ENCODE measurements at regions of chr9 and their contacts with region 1.

Region 1: GRCh38 chr9:35111001-35111933 is 4.4 kb downstream of the ATOSB start:
- DNase-seq: peak; percentile 77 to 96 (median 91)
- ATAC-seq: peak; percentile 86
- H3K4me3 ChIP-seq: peak overlapping the region; percentile 69
- H3K4me3 Mint-ChIP-seq: peak overlapping the region; percentile 55 to 87 (median 80)
- H3K27ac ChIP-seq: peak overlapping the region; percentile 71
- H3K27ac Mint-ChIP-seq: peak overlapping the region; percentile 62 to 94 (median 85)
- H3K4me1 ChIP-seq: peaks cover 36 to 37% of the 10 kb centered on the region in 2 donors
- H3K4me1 Mint-ChIP-seq: peaks cover 29 to 63% (median 58%) of the 10 kb centered on the region in 7 donors
- H3K27me3 ChIP-seq: no peaks in the 10 kb centered on the region
- H3K27me3 Mint-ChIP-seq: no peaks in the 10 kb centered on the region

Region 2: DNA sequence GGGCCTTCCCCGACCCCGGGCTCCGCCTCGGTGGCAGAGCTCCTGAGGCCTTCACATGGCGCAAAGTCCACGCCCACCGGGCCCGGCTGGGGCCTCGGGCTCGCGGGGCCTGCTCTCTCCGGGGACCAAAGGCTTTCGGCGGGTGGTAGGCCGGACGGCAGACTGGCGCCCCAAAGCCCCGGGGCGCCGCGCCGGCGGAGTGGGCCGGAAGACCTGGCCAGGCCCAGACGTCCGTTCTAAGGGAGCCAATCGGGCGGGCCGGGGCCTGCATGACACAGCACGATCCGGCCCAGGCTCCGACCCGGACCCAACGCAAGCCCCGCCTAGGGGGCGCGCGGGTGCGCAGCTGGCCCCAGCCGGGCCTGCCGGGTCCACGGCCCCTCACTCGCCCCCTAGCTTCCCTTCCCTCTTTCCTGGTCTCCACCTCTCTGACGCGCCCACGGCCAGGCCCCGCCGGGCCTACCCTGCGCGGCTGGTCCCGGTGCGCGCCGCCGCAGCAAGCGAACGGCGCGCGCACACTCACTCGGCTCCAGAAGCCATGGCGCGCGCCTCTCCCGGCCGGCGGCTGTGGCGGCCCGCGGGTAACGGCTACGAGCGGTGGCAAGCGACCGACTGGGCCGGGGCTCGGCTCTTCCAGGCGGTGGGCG is 39.3 kb before region 1 on chr9:
- CTCF ChIA-PET with region 1: no interaction called
- POLR2A ChIA-PET with region 1: interaction called, 11 read pairs
- intact Hi-C with region 1: loop called (anchors 1 kb)
- DNase-seq: peak in 8 of 9 donors; percentile 67 to 83 (median 71)
- ATAC-seq: peak; percentile 70
- H3K4me3 ChIP-seq: peak overlapping the region; percentile 53
- H3K4me3 Mint-ChIP-seq: peak overlapping the region; percentile 74 to 95 (median 88)
- H3K27ac ChIP-seq: peak overlapping the region; percentile 93
- H3K27ac Mint-ChIP-seq: peak overlapping the region; percentile 81 to 96 (median 91)
- H3K4me1 ChIP-seq: peaks cover 22 to 43% of the 10 kb centered on the region in 2 donors
- H3K4me1 Mint-ChIP-seq: peaks cover 34 to 66% (median 53%) of the 10 kb centered on the region in 7 donors
- H3K27me3 ChIP-seq: no peaks in the 10 kb centered on the region
- H3K27me3 Mint-ChIP-seq: peaks cover 0 to 3% (median 0%) of the 10 kb centered on the region in 5 donors

Region 3: DNA sequence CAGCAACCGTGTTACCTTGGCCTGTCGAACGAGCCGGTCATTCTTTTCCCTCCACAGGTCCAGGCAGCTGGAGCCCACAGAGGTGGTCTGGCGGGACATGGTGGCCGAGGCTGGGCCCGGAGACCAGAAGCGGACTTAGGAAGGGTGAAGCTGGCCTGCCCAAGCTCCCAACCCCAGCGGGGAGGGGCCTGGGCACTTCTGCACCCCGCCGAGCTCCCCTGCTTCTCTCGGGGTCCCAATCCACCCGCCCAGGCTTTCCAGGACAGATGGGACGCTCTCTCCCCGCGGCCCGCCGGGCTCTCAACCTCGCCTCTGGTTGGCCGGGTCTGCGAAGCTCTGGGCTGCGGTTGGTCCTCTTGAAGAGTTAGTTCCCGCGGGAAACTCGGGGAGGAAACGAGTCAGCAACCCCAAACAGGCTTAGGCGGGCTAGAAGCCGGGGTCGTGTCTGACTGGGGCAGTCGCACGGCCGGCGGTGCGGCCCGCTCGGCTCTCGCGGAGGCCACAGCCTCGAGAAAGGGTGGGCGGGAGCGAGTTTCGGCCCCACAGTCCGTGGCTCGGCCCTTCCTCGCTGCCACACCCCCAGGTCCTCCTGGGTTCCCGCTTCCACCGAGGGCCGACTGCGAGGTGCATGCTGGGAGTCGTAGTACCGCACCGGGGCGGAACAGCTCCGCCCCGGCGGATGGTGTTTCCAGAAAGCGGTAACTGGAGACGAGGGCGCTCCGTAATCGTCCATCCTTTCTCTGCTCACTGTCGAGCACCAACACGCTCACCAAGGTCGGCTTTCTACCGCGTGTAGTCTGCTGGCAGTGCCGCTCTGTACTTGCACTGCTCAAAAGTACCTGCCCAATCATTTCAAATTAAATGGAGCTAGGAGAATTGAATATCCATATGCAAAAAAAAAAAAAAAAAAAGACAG is 31.6 kb before region 1 on chr9 and contains the start of gene FANCG:
- CTCF ChIA-PET with region 1: interaction called, 5 read pairs
- POLR2A ChIA-PET with region 1: interaction called, 6 read pairs
- intact Hi-C with region 1: loop called (anchors 1 kb)
- DNase-seq: peak; percentile 60 to 87 (median 73)
- ATAC-seq: peak; percentile 98
- H3K4me3 ChIP-seq: peak within 1 kb of the TSS; percentile 84
- H3K4me3 Mint-ChIP-seq: peak within 1 kb of the TSS; percentile 84 to 98 (median 94)
- H3K27ac ChIP-seq: peak within 1 kb of the TSS; percentile 74
- H3K27ac Mint-ChIP-seq: peak within 1 kb of the TSS; percentile 76 to 99 (median 91)
- H3K4me1 ChIP-seq: peaks cover 8 to 10% of the 10 kb centered on the region in 2 donors
- H3K4me1 Mint-ChIP-seq: peaks cover 13 to 38% (median 24%) of the 10 kb centered on the region in 7 donors
- H3K27me3 ChIP-seq: no peaks in the 10 kb centered on the region
- H3K27me3 Mint-ChIP-seq: no peaks in the 10 kb centered on the region
- total RNA-seq, gene FANCG: 19.6 to 84.9 (median 26.7) TPM